AG04449 (cell line): ENCODE measurements at regions of chr17 and their contacts with region 1.

Region 1: DNA sequence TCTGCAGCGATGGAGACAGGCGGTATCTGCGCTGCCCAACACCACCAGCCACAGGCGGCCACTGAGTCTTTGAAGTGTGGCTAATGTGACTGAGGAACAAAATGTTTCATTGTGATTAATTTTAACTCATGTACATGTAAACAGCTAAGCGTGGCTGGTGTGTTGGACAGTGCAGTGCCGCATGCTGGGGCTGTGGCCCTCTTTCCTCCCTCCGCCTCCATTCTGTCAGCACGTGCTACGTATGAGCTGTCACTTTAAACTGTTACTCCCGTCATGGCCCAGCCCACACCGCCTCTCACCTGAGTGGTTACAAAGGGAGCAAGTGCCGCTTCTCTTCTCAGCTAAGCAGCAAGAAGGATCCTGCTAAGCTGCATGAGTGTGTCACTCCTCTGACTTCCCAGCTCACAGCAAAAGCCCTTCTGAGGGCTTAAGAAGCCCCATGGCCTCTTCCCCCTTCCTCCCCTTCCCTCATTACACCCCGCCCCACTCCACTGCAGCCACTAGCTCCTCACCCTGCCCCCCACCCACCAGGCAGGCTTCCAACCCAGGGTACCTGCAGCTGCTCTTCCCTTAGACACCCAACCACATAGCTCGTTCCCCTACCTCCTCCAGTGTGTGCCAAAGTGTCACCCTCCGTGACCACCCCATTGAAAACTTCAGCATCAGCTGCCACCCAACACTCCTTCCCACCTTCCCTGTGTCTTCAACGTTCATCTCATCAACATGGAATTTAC is 15.0 kb downstream of the HASPIN start:
- DNase-seq: no peak
- H3K4me3 ChIP-seq: no peak overlapping the region
- CTCF ChIP-seq: no peak

Region 2: DNA sequence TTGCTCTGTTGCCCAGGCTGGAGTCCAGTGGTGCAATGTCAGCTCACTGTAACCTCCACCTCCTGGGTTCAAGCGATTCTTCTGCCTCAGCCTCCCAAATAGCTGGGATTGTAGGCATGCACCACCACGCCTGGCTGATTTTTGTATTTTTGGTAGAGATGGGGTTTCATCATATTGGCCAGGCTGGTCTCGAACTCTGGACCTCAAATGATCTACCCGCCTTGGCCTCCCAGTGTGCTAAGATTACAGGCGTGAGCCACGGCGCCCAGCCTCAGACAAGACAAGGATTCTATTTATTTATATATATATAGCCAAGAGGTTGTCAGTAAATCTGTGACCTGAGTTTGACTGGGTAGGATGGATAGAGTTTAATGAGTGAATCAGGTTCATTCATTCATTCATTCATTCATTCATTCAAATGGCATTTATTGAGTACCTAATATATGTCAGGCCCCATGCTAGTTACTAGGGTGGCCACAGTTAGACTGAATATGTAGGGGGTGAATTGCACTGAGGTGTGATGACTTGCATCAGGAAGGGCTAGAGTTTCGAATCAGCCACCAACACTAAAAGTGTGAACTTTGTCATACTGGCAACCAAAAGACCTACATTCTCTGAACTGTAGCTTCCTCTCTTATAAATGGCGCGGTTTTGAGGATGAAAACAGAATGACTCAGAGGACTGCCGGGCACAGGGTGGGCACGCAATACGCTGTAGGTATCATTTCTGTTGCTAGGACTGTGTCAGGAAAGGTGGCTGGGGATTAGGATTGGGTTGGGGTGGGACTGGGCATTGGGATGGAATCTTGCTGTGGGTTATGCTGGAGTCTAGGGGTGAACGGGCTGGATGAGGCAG is 24.4 kb after region 1 on chr17:
- CTCF ChIA-PET with region 1: interaction called, 13 read pairs
- POLR2A ChIA-PET with region 1: no interaction called
- DNase-seq: no peak
- H3K4me3 ChIP-seq: no peak overlapping the region
- CTCF ChIP-seq: no peak

Region 3: GRCh38 chr17:3802461-3803307 is 64.0 kb after region 1 on chr17:
- CTCF ChIA-PET with region 1: interaction called, 189 read pairs
- POLR2A ChIA-PET with region 1: no interaction called
- DNase-seq: peak; percentile 62
- H3K4me3 ChIP-seq: no peak overlapping the region
- CTCF ChIP-seq: no peak

Region 4: DNA sequence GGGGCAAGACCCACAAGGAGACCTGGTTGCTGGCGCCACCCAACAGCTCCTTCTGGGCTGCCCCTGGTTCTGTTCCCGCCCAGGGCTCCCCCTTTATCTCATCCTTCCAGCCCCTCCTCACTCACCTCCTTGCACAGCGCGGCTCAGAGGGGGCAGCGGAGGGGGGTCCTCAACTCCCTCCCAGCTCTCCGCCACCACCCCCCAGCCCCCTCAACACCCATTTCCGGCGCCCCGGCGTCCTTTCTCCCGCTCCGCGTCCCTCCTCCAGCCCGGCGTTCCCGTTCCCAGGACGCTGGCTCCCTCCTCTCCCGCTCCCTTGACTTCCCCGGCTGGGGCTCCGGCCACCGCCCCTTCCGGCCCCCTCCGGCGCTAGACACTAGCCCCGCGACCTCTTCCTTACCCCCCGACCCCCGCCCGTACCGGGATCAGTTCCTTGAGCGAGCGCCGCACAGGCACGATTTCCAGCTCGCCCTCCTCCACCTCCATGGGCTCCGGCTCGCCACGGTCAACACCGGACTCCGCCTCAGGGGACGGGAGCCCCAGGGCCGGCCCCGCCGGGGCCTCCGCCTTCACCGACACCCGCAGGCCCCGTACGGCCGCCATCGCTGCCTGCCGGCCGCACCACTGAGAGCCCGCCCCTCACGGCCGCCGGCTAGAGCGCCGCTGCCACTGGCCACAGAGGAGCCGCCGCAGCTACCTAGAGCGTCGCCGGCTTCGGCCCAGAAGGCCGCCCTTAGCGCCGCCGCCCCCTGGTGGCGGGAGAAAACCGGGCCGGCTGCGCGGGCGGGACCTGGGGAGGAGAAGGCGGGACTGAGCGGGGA is 107.1 kb after region 1 on chr17 and contains the start of gene NCBP3:
- CTCF ChIA-PET with region 1: interaction called, 201 read pairs
- POLR2A ChIA-PET with region 1: interaction called, 3 read pairs
- DNase-seq: peak; percentile 44
- H3K4me3 ChIP-seq: peak within 1 kb of the TSS; percentile 93
- CTCF ChIP-seq: peak; percentile 99

Region 5: DNA sequence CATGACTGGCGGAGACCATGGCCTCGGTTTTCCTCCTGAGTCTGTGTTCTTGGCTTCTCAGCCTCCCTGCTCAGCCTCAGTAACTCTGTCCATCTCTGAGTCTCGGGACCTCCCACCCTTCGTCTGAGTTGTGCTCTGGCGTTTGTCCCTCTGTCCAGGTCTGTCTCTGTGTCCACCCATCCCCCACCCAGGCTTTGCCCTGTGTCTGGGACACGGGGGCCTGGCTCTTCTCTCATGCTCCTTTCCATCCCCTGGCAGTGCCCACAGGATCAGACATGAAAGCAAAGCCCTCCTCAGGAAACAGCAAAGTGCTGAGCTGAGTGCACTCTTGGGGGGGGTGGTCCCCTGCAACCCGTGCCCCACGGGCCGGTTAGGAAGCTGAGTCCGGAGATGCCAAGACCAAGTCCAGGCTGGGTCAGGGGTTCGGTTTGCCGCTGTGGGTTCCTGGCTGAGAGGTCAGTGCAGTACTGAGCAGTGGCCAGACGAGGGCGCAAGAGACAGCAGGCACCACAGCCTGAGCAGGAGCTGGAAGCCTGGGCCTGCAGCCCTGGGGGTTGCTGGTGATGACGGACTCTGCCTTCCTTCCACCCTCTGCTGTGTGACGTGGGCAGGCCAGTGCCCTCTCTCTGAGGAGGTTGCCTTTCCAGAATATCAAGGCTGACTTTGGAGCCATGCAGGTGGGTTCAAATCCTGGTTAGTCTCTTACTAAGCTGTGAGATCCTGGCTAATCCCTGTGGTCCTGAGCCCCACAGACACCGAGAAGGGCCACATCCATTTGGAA is 175.0 kb after region 1 on chr17:
- CTCF ChIA-PET with region 1: interaction called, 49 read pairs
- POLR2A ChIA-PET with region 1: no interaction called
- DNase-seq: no peak
- H3K4me3 ChIP-seq: no peak overlapping the region
- CTCF ChIP-seq: peak; percentile 99